K562 (cell line): ENCODE measurements at regions of chr7 and their contacts with region 1.

Region 1: DNA sequence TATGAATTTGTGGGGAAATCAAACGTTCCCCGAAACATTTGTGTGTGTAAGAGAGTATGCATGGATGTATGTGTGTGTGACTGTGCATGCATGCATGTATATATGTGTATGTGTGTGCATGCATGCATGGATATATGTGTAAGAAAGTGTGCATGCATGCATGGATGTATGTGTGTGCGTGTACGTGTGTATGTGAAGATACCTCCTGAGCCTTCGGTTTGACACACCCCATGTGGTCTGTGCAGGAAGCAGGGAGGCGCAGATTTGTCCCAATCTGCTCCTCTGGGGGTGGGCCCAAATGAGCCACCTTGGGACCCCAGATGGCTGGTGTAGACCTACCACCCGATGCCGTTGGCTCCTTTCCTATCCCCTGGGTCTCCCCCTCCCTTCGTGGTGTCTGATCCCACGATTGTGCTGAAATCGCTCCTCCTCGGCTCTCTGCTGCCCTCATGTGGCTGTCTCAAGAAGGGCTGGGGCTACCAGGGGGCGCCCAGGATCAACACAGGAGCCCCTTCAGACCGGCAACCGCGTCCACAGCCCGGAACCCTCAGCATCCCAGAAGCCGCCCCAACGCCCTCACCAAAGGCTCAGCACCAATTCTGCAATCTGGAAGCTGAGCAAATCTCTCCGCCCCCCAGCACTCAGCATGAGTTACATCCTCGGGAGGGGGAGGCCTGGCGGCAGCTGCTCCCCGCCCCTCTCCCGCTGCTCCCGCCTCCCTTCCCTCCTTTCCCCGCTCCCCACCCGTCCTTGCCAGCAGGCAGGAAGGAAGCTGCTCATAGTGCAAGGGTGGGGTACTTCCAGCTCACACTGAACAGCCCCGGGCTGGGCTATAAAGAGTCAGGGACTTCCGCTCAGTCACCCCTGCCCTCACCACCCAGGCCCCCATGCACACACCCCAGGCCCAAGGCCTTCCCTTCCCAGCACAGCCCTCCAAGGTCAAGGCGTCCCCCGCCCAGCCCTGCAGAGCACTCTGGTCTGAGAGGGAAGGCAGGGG is 2.3 kb upstream of the NOS3 start:
- DNase-seq: peak; percentile 89 to 92 (median 91)
- ATAC-seq: peak; percentile 82
- H3K4me3 ChIP-seq: no peak overlapping the region
- H3K27ac ChIP-seq: no peak overlapping the region
- H3K4me1 ChIP-seq: peaks cover 26 to 36% of the 10 kb centered on the region in 2 experiments
- H3K27me3 ChIP-seq: no peaks in the 10 kb centered on the region
- CTCF ChIP-seq: peak; percentile 98 to 99 (median 98)
- EP300 ChIP-seq: no peak
- POLR2A ChIP-seq: no peak
- RAD21 ChIP-seq: peak; percentile 95 to 96

Region 2: GRCh38 chr7:150317748-150318444 is 670.6 kb before region 1 on chr7:
- CTCF ChIA-PET with region 1: no interaction called
- POLR2A ChIA-PET with region 1: no interaction called
- in situ Hi-C with region 1: no loop called
- intact Hi-C with region 1: loop called (anchors 10 kb)
- DNase-seq: peak; percentile 51 to 88 (median 60)
- ATAC-seq: peak; percentile 48
- H3K4me3 ChIP-seq: no peak overlapping the region
- H3K27ac ChIP-seq: peak overlapping the region; percentile 76
- H3K4me1 ChIP-seq: peaks cover 50 to 89% of the 10 kb centered on the region in 2 experiments
- H3K27me3 ChIP-seq: no peaks in the 10 kb centered on the region
- CTCF ChIP-seq: no peak
- EP300 ChIP-seq: peak; percentile 77
- POLR2A ChIP-seq: no peak
- RAD21 ChIP-seq: peak; percentile 11; a peak in 2 of 4 replicates

Region 3: GRCh38 chr7:150778738-150779301 is 209.7 kb before region 1 on chr7:
- CTCF ChIA-PET with region 1: interaction called, 7 read pairs
- POLR2A ChIA-PET with region 1: no interaction called
- in situ Hi-C with region 1: no loop called
- intact Hi-C with region 1: loop called (anchors 1 kb)
- DNase-seq: peak; percentile 80 to 85 (median 83)
- ATAC-seq: peak; percentile 99
- H3K4me3 ChIP-seq: no peak overlapping the region
- H3K27ac ChIP-seq: no peak overlapping the region
- H3K4me1 ChIP-seq: no peaks in the 10 kb centered on the region
- H3K27me3 ChIP-seq: peaks cover 10 to 15% of the 10 kb centered on the region in 2 experiments; a peak in 3 of 5 replicates
- CTCF ChIP-seq: peak; percentile 93 to 98 (median 97)
- EP300 ChIP-seq: peak; percentile 12; the same call in 1 of the 2 replicates
- POLR2A ChIP-seq: no peak
- RAD21 ChIP-seq: peak; percentile 95 to 97

Region 4: DNA sequence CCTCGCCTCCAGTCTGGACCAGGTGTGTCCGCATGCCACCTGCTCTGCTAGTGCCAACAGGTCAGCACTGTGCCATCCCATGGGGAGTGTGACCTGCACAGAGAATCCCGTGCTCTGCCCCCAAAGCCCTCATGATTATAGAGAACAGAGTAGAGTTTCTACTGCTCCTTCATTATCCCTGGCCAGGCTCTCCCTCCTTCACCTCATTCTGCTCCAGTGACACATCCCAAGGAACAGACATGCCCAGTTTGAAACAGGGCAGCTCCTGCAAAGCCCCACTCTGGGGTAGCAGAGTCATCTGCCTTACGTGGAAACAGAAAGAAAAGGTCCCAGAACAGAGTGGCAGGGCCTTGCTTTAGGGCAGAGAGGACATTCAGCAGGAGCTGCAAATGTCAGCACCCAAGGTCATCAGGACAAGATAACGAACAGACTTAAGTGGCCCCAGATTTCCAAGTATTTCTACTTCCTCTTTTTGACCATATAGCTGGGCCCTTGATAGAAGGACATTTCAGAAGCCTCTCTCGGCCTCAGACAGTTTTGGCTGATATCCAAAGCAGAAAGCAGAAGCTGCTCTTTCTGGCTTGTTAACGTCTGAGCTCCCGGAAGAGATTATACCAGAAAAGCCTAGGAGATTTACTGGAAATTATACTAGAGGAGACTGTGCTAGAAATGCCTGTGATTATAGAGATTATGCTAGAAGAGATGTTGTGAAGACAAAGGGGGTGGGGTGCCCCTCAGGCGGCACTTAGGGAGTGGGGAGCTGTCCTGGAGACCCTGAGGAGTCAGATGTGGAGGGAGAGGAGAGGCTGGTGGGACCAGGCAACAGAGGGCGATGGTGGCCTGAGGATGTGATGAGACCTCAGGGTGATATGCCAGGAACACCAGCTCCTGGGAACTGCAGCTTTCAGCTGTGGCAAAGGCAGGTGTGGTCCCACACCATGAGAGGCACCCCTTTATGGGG is 200.9 kb before region 1 on chr7:
- CTCF ChIA-PET with region 1: interaction called, 3 read pairs
- POLR2A ChIA-PET with region 1: no interaction called
- in situ Hi-C with region 1: loop called (anchors 5 kb)
- intact Hi-C with region 1: no loop called
- DNase-seq: peak in 3 of 4 experiments; percentile 35 to 81 (median 51)
- ATAC-seq: peak; percentile 92
- H3K4me3 ChIP-seq: no peak overlapping the region
- H3K27ac ChIP-seq: no peak overlapping the region
- H3K4me1 ChIP-seq: peaks cover 10% of the 10 kb centered on the region in 2 experiments; a peak in 4 of 5 replicates
- H3K27me3 ChIP-seq: peaks cover 47 to 63% of the 10 kb centered on the region in 2 experiments; a peak in 4 of 5 replicates
- CTCF ChIP-seq: no peak
- EP300 ChIP-seq: peak; percentile 86
- POLR2A ChIP-seq: no peak
- RAD21 ChIP-seq: peak in 1 of 2 experiments; percentile 18; a peak in 2 of 4 replicates

Region 5: DNA sequence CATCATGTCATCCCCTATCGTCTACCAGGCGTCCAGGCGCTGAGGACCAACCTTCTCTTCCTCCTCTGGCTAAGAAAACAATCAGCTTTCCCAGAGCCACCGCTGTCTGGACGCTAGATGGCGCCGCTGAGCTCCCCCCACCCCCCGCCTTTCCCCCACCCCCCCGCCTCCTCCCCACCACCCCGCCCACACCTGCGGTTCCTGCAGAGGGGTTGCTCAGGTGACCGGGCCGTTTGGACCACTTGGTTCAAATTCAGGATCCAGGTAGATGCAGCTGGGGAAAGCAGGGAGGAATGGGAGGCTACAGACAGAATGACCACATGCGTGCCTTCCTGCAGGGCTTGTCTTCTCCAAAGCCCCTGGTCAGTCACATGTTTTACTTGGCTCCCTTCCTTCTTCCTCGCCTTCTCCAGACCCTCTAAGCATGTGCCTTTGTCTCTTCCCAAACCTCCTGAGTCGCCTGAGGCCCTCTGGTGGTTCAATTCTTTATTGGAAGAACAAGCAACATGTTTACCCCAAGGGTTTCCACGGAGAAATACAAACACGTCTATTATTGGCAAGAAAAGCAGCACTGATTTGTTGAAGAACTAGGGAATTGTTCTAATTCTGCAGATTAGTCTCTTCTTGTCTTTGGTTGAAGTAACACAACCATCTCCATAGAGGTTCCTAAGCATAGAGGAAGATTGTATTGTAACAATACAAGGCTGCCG is 111.6 kb before region 1 on chr7:
- CTCF ChIA-PET with region 1: interaction called, 12 read pairs
- POLR2A ChIA-PET with region 1: interaction called, 3 read pairs
- in situ Hi-C with region 1: no loop called
- intact Hi-C with region 1: loop called (anchors 2 kb)
- DNase-seq: peak; percentile 86 to 96 (median 94)
- ATAC-seq: peak; percentile 91
- H3K4me3 ChIP-seq: no peak overlapping the region
- H3K27ac ChIP-seq: no peak overlapping the region
- H3K4me1 ChIP-seq: peaks cover 0 to 3% of the 10 kb centered on the region in 2 experiments; a peak in 2 of 5 replicates
- H3K27me3 ChIP-seq: peaks cover 14 to 24% of the 10 kb centered on the region in 2 experiments
- CTCF ChIP-seq: peak; percentile 61 to 78 (median 75); a peak in 5 of 6 replicates
- EP300 ChIP-seq: no peak
- POLR2A ChIP-seq: no peak
- RAD21 ChIP-seq: peak; percentile 46 to 64

Region 6: GRCh38 chr7:150898475-150899011 is 90.0 kb before region 1 on chr7:
- CTCF ChIA-PET with region 1: interaction called, 36 read pairs
- POLR2A ChIA-PET with region 1: interaction called, 4 read pairs
- in situ Hi-C with region 1: loop called (anchors 5 kb)
- intact Hi-C with region 1: loop called (anchors 1 kb)
- DNase-seq: peak; percentile 88 to 93 (median 92)
- ATAC-seq: peak; percentile 94
- H3K4me3 ChIP-seq: no peak overlapping the region
- H3K27ac ChIP-seq: no peak overlapping the region; the same call in 2 of the 3 replicates
- H3K4me1 ChIP-seq: peaks cover 17 to 36% of the 10 kb centered on the region in 2 experiments; a peak in 4 of 5 replicates
- H3K27me3 ChIP-seq: peaks cover 17 to 27% of the 10 kb centered on the region in 2 experiments; a peak in 4 of 5 replicates
- CTCF ChIP-seq: peak; percentile 97 to 100 (median 98)
- EP300 ChIP-seq: peak; percentile 17; the same call in 1 of the 2 replicates
- POLR2A ChIP-seq: no peak
- RAD21 ChIP-seq: peak; percentile 99

Region 7: GRCh38 chr7:150962553-150963399 is 25.8 kb before region 1 on chr7:
- CTCF ChIA-PET with region 1: interaction called, 27 read pairs
- POLR2A ChIA-PET with region 1: interaction called, 6 read pairs
- in situ Hi-C with region 1: no loop called
- intact Hi-C with region 1: loop called (anchors 1 kb)
- DNase-seq: peak; percentile 81 to 92 (median 86)
- ATAC-seq: peak; percentile 79
- H3K4me3 ChIP-seq: no peak overlapping the region
- H3K27ac ChIP-seq: peak overlapping the region; percentile 99
- H3K4me1 ChIP-seq: peaks cover 77 to 80% of the 10 kb centered on the region in 2 experiments
- H3K27me3 ChIP-seq: no peaks in the 10 kb centered on the region
- CTCF ChIP-seq: peak; percentile 98 to 99 (median 98)
- EP300 ChIP-seq: 0 out of 2 replicates have a peak, but pooled peaks have one; percentile 4
- POLR2A ChIP-seq: no peak
- RAD21 ChIP-seq: peak; percentile 98

Region 8: DNA sequence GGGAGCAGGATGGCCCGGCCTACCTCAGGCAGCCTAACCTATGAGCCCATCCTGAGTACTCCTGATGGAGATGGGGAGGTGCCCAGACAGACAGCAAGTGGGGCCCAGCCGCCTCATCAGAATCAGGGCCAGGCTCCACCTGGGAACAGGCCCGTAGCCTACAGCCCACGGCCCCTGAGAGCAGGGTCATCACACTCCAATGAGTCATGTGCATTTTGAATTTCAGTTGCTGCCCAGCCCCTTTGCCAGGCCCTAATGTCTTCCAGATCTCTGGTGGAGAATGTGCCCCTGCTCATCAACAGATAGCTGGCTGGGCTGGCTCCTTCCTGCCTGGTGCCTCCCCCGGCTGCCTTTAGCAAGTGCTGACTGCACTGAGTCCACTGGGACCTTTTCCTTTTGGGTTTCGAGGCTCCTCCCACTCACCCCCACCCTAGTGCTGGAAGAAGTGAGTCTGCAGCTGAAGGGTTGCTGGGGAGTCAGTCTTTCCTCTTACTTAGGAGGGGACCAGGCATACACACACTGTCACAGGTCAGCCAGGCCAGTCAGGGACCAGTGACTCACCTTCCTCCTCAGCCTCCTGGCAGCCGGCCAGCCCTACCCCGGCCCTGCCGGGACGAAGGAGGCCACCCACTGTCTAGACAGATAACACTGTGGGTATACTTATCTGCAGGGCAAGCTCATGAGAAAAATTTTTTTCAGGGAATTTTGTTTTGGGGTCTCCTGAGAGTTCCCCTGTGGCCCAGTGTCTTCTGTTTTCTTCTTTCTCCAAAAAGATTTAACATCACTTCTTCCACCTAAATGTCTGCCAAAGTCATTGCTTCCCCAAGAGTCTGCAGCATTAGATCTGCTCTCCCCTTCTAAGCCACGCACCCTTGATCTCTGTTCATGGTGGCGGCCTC is 50.7 kb after region 1 on chr7:
- CTCF ChIA-PET with region 1: no interaction called
- POLR2A ChIA-PET with region 1: no interaction called
- in situ Hi-C with region 1: no loop called
- intact Hi-C with region 1: no loop called
- DNase-seq: peak; percentile 99 to 100 (median 99)
- ATAC-seq: peak; percentile 97
- H3K4me3 ChIP-seq: no peak overlapping the region; the same call in 1 of the 2 replicates
- H3K27ac ChIP-seq: peak overlapping the region; percentile 65
- H3K4me1 ChIP-seq: peaks cover 24 to 73% of the 10 kb centered on the region in 2 experiments
- H3K27me3 ChIP-seq: no peaks in the 10 kb centered on the region
- CTCF ChIP-seq: peak in 1 of 3 experiments; percentile 7; a peak in 1 of 6 replicates
- EP300 ChIP-seq: peak; percentile 93
- POLR2A ChIP-seq: peak; percentile 56; the same call in 1 of the 2 replicates
- RAD21 ChIP-seq: peak in 1 of 2 experiments; percentile 28; a peak in 3 of 4 replicates